Esophagus muscularis mucosa (tissue), 4 donors: ENCODE measurements at regions of chr1 and their contacts with region 1.

Region 1: DNA sequence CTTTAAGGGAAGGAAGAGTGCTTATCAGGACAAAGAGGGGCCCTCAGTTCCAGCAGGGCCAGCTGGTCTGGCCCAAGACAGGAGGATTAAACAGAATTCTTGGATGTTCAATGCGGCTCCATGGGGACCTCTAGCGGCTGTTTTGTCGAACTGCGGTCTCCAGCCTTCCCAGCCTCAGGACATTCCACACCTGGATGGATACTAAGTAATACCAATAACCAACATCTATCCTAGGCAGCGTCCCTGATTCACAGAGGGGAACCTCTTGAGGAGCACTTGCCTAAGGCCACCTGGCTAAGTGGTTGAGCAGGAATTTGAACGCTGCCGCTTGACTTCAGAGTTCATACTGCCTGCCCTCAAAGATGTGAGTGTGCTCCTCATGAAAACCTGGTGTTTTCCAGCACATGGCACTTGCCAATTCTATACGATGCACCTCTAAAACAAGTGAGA is 15.5 kb upstream of the CD247 start:
- DNase-seq: no peak
- H3K4me3 ChIP-seq: no peak overlapping the region
- H3K27ac ChIP-seq: no peak overlapping the region
- H3K4me1 ChIP-seq: peaks cover 5 to 20% (median 16%) of the 10 kb centered on the region in 4 donors
- H3K27me3 ChIP-seq: no peaks in the 10 kb centered on the region
- CTCF ChIP-seq: peak; percentile 80 to 95 (median 86)
- EP300 ChIP-seq: no peak
- POLR2A ChIP-seq: no peak

Region 2: DNA sequence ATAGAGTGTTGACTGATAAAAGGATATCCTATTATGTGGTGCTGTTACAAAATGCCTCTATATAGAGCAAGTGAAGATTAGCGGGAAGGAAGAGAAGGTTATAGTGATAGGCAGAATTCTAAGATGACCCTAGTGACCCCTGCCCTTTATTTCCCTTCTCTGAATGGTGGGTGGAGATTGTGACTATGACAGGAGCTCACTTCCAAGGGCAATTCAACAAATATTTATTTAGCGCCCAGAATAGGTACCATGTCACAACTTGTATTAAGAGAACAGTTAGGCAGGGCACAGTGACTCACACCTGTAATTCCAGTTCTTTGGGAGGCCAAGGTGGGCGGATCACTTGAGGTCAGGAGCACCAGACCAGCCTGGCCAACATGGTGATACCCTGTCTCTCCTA is 930.6 kb before region 1 on chr1:
- intact Hi-C with region 1: no loop called
- DNase-seq: no peak
- H3K4me3 ChIP-seq: no peak overlapping the region
- H3K27ac ChIP-seq: no peak overlapping the region
- H3K4me1 ChIP-seq: peaks cover 0 to 5% (median 0%) of the 10 kb centered on the region in 4 donors
- H3K27me3 ChIP-seq: no peaks in the 10 kb centered on the region
- CTCF ChIP-seq: no peak
- EP300 ChIP-seq: no peak
- POLR2A ChIP-seq: no peak

Region 3: GRCh38 chr1:166902271-166902670 is 631.6 kb before region 1 on chr1:
- intact Hi-C with region 1: loop called (anchors 10 kb)
- DNase-seq: no peak
- H3K4me3 ChIP-seq: no peak overlapping the region
- H3K27ac ChIP-seq: no peak overlapping the region
- H3K4me1 ChIP-seq: peaks cover 0 to 8% (median 2%) of the 10 kb centered on the region in 4 donors
- H3K27me3 ChIP-seq: no peaks in the 10 kb centered on the region
- CTCF ChIP-seq: no peak
- EP300 ChIP-seq: no peak
- POLR2A ChIP-seq: no peak

Region 4: GRCh38 chr1:167066333-167067122 is 467.3 kb before region 1 on chr1:
- intact Hi-C with region 1: loop called (anchors 2 kb)
- DNase-seq: no peak
- H3K4me3 ChIP-seq: peak overlapping the region; percentile 33 to 51 (median 36)
- H3K27ac ChIP-seq: no peak overlapping the region
- H3K4me1 ChIP-seq: peaks cover 6 to 8% (median 7%) of the 10 kb centered on the region in 4 donors
- H3K27me3 ChIP-seq: no peaks in the 10 kb centered on the region
- CTCF ChIP-seq: peak; percentile 89 to 100 (median 92)
- EP300 ChIP-seq: no peak
- POLR2A ChIP-seq: no peak

Region 5: DNA sequence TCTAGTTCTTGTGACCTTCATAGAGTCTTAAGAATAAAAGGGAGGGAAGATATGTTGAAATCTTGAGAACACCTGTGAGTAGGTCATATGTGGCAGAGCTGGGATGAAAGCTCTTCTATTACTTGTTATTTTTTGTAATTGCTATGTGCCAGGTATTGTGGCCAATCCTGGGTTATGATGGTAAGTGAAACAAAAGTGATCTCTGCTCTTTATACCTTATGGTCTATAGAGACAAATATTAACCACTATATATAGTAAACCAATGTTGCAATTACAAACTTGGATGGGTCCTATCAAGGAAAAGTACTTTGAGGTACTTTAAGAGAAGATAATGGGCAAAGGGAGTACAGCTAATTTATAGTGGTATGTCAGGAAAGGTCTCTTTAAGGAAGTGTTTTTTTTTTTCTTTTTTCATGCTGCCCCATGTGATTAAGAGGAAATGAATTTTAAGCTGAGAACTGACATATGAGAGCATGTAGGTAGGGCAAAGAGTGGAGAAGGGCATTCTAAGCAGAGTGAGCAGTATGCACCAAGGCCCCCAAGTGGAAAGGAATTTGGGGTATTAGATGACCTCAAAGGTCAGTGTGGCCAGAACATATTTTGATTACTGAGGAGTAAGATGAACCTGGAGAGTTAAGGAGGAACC is 269.9 kb before region 1 on chr1:
- intact Hi-C with region 1: loop called (anchors 5 kb)
- DNase-seq: no peak
- H3K4me3 ChIP-seq: no peak overlapping the region
- H3K27ac ChIP-seq: no peak overlapping the region
- H3K4me1 ChIP-seq: peaks cover 32 to 61% (median 41%) of the 10 kb centered on the region in 4 donors
- H3K27me3 ChIP-seq: no peaks in the 10 kb centered on the region
- CTCF ChIP-seq: no peak
- EP300 ChIP-seq: no peak
- POLR2A ChIP-seq: no peak

Region 6: DNA sequence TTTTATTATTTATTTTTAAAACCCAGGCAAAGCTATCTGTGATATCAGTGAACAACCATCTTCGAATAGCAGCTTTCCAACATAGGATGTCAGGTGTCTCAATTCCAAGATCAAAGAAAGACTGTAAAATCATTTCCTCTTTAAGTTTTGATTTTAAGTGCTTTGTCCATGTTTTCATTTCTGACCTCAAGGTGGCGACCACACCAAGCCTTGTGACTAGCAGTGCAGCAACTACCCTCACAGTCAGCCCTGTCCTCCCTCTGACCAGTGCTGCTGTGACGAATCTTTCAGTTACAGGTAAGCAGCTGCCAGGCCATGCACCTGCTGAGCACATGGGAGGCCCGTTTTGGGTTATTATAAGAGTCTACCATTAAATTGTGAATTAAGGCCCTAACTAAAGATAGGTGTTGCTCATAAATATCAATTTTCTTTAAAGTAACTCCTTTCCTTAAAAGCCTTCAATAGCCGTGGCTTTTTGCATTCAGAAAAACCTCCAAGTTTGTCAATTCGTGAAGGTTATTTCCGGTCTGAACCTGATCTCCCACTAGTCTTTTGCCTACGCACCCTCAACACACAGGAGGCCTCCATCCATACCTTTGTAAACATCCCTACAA is 132.5 kb before region 1 on chr1:
- intact Hi-C with region 1: loop called (anchors 5 kb)
- DNase-seq: no peak
- H3K4me3 ChIP-seq: no peak overlapping the region
- H3K27ac ChIP-seq: no peak overlapping the region
- H3K4me1 ChIP-seq: peaks cover 0 to 10% (median 3%) of the 10 kb centered on the region in 4 donors
- H3K27me3 ChIP-seq: no peaks in the 10 kb centered on the region
- CTCF ChIP-seq: peak; percentile 37 to 43 (median 39)
- EP300 ChIP-seq: no peak
- POLR2A ChIP-seq: no peak

Region 7: GRCh38 chr1:167752219-167752985 is 218.5 kb after region 1 on chr1:
- intact Hi-C with region 1: no loop called
- DNase-seq: no peak
- H3K4me3 ChIP-seq: no peak overlapping the region
- H3K27ac ChIP-seq: peak overlapping the region in 1 of 4 donors; percentile 19
- H3K4me1 ChIP-seq: peaks cover 36 to 67% (median 59%) of the 10 kb centered on the region in 4 donors
- H3K27me3 ChIP-seq: no peaks in the 10 kb centered on the region
- CTCF ChIP-seq: no peak
- EP300 ChIP-seq: no peak
- POLR2A ChIP-seq: no peak